ENCODE measurements at regions of chr22 and their contacts with region 1.

Region 1: GRCh38 chr22:38230108-38230825 is 28.5 kb downstream of the MAFF start:
- DNase-seq: peak; percentile 66
- H3K4me3 Mint-ChIP-seq: no peak overlapping the region
- H3K27ac Mint-ChIP-seq: peak overlapping the region; percentile 58
- H3K4me1 Mint-ChIP-seq: peaks cover 22% of the 10 kb centered on the region
- H3K27me3 Mint-ChIP-seq: no peaks in the 10 kb centered on the region

Region 2: GRCh38 chr22:38104084-38104483 is 126.2 kb before region 1 on chr22:
- CTCF ChIA-PET with region 1: interaction called, 13 read pairs
- POLR2A ChIA-PET with region 1: no interaction called
- DNase-seq: no peak
- H3K4me3 Mint-ChIP-seq: no peak overlapping the region
- H3K27ac Mint-ChIP-seq: no peak overlapping the region
- H3K4me1 Mint-ChIP-seq: peaks cover 14% of the 10 kb centered on the region
- H3K27me3 Mint-ChIP-seq: no peaks in the 10 kb centered on the region

Measured in activated CD4-positive, alpha-beta memory T cell treated with anti-CD3 and anti-CD28 coated beads, Interleukin-2, amount 10 ng/mL, durations not matched to agents 7 days and 5 days (primary cell).